Activated naive CD8-positive, alpha-beta T cell treated with anti-CD3 and anti-CD28 coated beads, Interleukin-2, amount 10 ng/mL, durations not matched to agents 7 days and 5 days (primary cell): ENCODE measurements at regions of chr20 and their contacts with region 1.

Region 1: DNA sequence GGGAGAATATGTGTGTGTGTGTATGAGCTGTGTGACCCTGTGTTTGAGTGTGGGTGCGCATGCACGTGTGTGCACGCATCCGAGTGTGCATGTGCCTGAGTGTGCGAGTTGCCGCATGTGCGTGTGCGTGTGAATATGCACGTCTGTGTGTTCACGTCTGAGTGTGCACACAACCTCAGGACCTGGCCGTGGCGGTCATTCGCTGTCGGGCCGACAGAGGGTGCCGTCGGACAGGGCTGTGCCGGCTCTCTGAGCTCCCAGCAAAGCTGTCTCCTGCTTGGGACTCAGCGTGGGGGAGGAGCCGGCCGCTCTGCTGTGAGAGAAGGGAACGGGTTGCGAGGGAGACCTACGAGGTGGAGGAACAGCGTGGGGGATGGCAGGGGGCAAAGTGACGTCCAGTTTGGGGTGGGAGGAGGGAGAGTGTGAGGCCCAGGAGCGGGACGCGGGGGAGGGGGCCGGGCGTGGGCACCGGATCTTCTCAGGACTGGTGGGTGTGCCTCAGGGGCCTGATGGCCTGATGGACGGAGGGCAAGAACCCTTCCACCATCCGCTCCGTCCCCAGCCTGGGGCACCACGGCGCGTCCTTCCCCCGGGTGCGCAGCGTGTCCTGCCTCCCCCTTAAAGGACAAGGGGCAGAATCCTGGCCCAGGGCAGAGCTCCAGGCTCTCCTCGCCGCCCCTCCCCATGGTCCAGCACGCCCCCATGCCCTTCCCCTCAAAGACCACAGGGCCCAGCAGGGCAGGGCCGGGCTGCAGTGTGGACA is 19.9 kb downstream of the SLC17A9 start:
- DNase-seq: peak; percentile 89
- ATAC-seq: peak; percentile 89
- H3K4me3 Mint-ChIP-seq: peak overlapping the region; percentile 70
- H3K27ac Mint-ChIP-seq: no peak overlapping the region
- H3K4me1 Mint-ChIP-seq: peaks cover 12% of the 10 kb centered on the region
- H3K27me3 Mint-ChIP-seq: peaks cover 42% of the 10 kb centered on the region

Region 2: DNA sequence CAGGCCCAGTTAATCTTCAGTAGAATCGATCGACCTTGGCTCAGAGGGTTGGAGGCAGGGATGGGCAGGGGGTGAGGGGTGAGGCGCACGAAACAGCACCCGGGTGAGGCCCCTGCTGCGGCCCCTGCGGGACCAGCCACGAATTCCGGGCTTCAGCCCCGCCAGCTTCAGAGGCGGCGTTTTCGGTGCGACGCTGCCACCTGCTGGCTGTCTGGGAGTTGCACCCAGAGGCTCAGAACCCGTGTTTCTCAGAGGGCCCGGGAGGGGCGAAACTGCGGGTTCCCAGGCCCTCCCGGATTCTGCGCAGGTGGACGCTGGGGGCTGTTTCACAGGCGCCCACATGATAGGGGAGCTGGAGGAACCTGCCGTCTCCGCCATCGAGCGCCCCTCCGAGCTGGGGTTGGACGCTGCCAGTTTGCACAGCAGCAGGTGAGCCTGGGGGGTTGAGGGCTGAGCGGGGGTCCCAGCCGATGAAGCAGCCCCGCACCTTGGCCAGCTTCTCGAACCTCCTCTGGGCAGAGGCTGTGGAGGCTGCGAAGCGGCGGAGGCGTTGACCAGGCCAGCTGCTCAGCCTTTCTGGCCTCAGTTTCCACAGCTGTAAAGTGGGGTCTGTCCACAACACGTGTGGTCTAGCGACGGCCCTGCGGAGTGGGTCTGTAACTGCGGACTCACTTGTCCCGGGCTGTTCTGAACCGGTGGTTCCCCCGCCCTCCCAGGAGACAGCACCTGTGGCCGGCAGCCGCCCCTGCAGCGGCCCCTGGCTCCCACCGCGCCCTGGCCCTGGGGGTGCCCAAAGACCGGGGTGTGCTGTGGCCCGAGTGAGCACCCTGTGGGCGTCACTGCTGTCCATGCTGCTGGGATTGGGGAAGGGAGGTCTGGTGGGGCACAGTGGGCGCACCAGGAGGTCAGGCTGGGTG is 36.9 kb after region 1 on chr20:
- POLR2A ChIA-PET with region 1: interaction called, 22 read pairs
- DNase-seq: peak; percentile 90
- ATAC-seq: peak; percentile 67
- H3K4me3 Mint-ChIP-seq: peak overlapping the region; percentile 40
- H3K27ac Mint-ChIP-seq: peak overlapping the region; percentile 12
- H3K4me1 Mint-ChIP-seq: peaks cover 14% of the 10 kb centered on the region
- H3K27me3 Mint-ChIP-seq: peaks cover 69% of the 10 kb centered on the region